Right cardiac atrium (tissue), 5 donors: ENCODE measurements at regions of chr14 and their contacts with region 1.

Region 1: DNA sequence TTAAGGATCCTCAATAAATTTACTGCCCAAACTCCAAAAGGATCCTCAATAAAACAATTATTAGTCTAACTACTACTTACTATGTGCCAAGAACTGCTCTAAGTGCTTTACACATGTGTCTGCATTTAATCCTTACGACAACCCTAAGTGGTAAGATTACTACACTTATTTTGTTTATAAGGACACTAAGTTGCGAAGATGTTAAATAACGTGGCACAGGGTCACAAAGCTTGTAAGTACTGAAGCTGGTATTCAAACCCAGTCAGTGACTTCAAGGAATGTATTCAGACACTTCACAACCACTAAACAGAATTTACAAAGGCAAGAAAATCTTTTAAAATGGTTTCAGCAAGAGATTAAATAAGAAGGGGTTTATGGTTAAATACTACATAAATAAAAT is 13.0 kb downstream of the FERMT2 start:
- DNase-seq: no peak
- ATAC-seq: no peak
- H3K4me3 ChIP-seq: no peak overlapping the region
- H3K27ac ChIP-seq: no peak overlapping the region
- H3K4me1 ChIP-seq: peaks cover 8% of the 10 kb centered on the region
- H3K27me3 ChIP-seq: no peaks in the 10 kb centered on the region

Region 2: DNA sequence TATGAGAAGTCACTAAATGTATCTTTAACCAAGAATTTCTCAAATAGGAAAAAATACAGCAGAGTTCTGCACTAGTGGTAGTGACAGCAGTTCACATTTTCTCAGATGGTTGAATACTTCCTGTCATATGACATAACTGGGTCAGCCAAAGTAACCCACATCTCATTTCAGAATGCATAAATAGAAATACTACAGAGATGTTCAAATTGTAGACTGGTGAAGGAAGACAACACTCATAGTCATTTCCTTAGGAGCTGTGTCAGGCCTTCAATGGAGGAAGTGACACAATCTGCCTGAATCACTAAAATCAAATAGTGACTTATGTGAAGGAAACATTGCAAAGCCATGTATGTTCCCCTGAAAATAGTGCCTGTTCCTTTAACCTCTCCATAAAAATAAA is 19.4 kb before region 1 on chr14:
- intact Hi-C with region 1: loop called in 1 of 4 experiments (anchors 2 kb)
- DNase-seq: no peak
- ATAC-seq: peak; percentile 70 to 84
- H3K4me3 ChIP-seq: no peak overlapping the region
- H3K27ac ChIP-seq: no peak overlapping the region
- H3K4me1 ChIP-seq: peaks cover 10% of the 10 kb centered on the region
- H3K27me3 ChIP-seq: no peaks in the 10 kb centered on the region